Psoas muscle (tissue), 8 donors: ENCODE measurements at regions of chr6 and their contacts with region 1.

Region 1: GRCh38 chr6:161370880-161371279 is 97.0 kb upstream of the AGPAT4 start:
- DNase-seq: peak; percentile 40 to 67
- ATAC-seq: peak in 2 of 4 donors; percentile 41 to 49
- H3K4me3 ChIP-seq: no peak overlapping the region
- H3K27ac ChIP-seq: no peak overlapping the region
- H3K4me1 ChIP-seq: peaks cover 6% of the 10 kb centered on the region
- H3K27me3 ChIP-seq: no peaks in the 10 kb centered on the region
- CTCF ChIP-seq: peak; percentile 67

Region 2: DNA sequence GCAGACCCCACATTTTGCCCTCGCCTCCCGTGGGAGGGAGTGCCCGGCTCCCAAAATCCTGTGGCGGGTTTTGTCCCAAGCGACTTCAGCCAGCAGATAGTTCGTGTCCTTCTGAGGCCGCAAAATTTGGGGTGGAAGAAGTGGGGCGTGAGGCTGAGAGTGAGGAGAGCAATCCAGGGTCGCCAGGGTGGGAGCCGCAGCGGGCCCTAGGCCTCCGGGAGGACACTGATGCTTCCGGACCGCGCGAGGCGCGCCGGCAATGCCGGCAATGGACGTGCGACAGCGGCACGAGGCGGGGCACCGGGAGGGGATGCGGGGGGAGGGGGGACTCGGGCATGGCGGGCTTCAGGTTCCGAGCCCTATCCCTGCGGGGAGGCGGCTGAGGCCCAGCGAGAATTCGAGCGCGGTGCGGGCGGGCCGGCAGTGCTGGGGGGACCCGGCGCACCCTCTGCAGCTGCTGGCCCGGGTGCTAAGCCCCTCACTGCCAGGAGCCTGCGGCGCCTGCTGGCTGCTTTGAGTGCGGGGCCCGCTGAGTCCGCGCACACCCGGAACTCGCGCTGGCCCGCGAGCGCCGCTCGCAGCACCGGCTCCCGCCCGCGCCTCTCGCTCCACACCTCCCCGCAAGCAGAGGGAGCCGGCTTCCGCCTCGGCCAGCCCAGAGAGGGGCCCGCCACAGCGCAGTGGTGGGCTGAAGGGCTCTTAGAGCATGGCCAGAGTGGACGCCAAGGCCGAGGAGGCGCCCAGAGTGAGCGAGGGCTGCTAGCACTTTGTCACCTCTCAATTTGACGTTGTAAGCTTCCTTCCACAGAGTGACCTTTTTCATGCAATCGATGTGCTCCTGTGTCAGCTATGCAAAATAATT is 850.6 kb before region 1 on chr6:
- intact Hi-C with region 1: loop called in 1 of 2 experiments (anchors 10 kb)
- DNase-seq: peak; percentile 76 to 88
- ATAC-seq: peak; percentile 91 to 97 (median 94)
- H3K4me3 ChIP-seq: peak overlapping the region; percentile 68
- H3K27ac ChIP-seq: peak overlapping the region; percentile 39
- H3K4me1 ChIP-seq: no peaks in the 10 kb centered on the region
- H3K27me3 ChIP-seq: no peaks in the 10 kb centered on the region
- CTCF ChIP-seq: no peak

Region 3: GRCh38 chr6:160775792-160776580 is 594.9 kb before region 1 on chr6:
- intact Hi-C with region 1: no loop called
- DNase-seq: no peak
- ATAC-seq: no peak
- H3K4me3 ChIP-seq: no peak overlapping the region
- H3K27ac ChIP-seq: no peak overlapping the region
- H3K4me1 ChIP-seq: no peaks in the 10 kb centered on the region
- H3K27me3 ChIP-seq: no peaks in the 10 kb centered on the region
- CTCF ChIP-seq: no peak

Region 4: GRCh38 chr6:161101517-161101916 is 269.4 kb before region 1 on chr6:
- intact Hi-C with region 1: loop called in 1 of 2 experiments (anchors 10 kb)
- DNase-seq: no peak
- ATAC-seq: no peak
- H3K4me3 ChIP-seq: no peak overlapping the region
- H3K27ac ChIP-seq: no peak overlapping the region
- H3K4me1 ChIP-seq: no peaks in the 10 kb centered on the region
- H3K27me3 ChIP-seq: no peaks in the 10 kb centered on the region
- CTCF ChIP-seq: no peak

Region 5: DNA sequence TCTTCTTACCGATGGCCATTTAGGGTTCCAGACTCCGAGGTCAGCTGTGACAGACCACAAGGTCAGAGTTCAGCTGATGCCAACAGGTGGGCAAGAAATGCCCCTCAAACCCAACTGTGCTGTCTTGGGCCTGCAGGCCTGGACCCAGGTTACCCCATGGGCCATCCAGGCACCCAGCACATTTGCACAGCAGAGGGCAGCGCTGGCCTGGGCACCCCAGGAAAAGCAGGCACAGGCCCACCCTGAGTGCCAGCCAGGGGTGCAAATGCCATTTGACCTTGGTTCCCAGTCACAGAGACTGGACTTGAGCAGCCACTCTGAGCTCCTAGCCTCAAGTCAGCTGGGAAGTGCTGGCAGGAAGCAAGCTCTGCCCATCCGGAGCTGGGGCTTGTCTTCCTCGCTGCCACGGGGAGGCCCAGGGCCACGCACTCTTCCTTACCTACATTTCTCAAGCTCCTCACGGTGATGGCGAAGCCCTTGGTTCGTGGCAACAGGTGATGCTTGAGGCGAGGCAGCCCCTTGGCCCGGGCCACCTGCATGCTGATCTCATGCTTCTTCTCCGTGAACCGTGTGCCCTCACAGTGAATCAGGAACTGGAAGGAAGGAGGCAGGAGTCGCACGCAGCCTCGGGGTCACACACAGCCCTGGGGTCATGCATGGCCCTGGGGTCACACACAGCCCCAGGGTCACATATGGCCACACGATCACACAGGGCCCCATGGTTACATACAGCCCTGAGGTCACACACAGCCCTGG is 217.8 kb before region 1 on chr6:
- intact Hi-C with region 1: loop called in 1 of 2 experiments (anchors 10 kb)
- DNase-seq: no peak
- ATAC-seq: peak in 2 of 4 donors; percentile 25 to 37
- H3K4me3 ChIP-seq: no peak overlapping the region
- H3K27ac ChIP-seq: no peak overlapping the region
- H3K4me1 ChIP-seq: no peaks in the 10 kb centered on the region
- H3K27me3 ChIP-seq: no peaks in the 10 kb centered on the region
- CTCF ChIP-seq: no peak

Region 6: GRCh38 chr6:161168281-161168891 is 202.5 kb before region 1 on chr6:
- intact Hi-C with region 1: loop called in 1 of 2 experiments (anchors 10 kb)
- DNase-seq: peak in 1 of 2 donors; percentile 57
- ATAC-seq: peak in 1 of 4 donors; percentile 61
- H3K4me3 ChIP-seq: no peak overlapping the region
- H3K27ac ChIP-seq: no peak overlapping the region
- H3K4me1 ChIP-seq: no peaks in the 10 kb centered on the region
- H3K27me3 ChIP-seq: no peaks in the 10 kb centered on the region
- CTCF ChIP-seq: no peak